OCI-LY7 (cell line): ENCODE measurements at regions of chr3 and their contacts with region 1.

Region 1: GRCh38 chr3:158005391-158006100 is 100.7 kb downstream of the SHOX2 start:
- DNase-seq: no peak
- H3K4me3 ChIP-seq: no peak overlapping the region
- H3K27ac ChIP-seq: no peak overlapping the region
- H3K4me1 ChIP-seq: no peaks in the 10 kb centered on the region
- CTCF ChIP-seq: no peak

Region 2: DNA sequence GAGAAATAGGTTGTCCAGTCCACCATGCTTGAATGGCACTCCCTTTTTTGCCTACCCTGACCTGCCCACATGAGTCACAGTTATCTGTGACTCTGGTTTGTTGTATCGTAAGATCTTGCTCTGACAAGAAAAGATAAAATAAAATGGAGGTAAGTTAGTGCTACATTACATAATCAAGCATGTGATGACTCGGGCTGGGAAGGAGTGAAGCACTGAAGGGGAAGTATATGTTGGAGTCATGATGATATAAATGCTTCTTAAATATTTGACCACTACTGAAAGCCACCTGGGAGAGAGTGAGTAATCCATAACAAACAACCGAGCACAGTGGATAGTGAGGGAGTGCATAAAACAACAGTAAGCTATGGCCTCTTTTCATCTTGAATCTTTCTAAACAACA is 23.7 kb before region 1 on chr3:
- CTCF ChIA-PET with region 1: no interaction called
- POLR2A ChIA-PET with region 1: no interaction called
- intact Hi-C with region 1: no loop called
- DNase-seq: no peak
- H3K4me3 ChIP-seq: no peak overlapping the region
- H3K27ac ChIP-seq: no peak overlapping the region
- H3K4me1 ChIP-seq: no peaks in the 10 kb centered on the region
- CTCF ChIP-seq: no peak

Region 3: DNA sequence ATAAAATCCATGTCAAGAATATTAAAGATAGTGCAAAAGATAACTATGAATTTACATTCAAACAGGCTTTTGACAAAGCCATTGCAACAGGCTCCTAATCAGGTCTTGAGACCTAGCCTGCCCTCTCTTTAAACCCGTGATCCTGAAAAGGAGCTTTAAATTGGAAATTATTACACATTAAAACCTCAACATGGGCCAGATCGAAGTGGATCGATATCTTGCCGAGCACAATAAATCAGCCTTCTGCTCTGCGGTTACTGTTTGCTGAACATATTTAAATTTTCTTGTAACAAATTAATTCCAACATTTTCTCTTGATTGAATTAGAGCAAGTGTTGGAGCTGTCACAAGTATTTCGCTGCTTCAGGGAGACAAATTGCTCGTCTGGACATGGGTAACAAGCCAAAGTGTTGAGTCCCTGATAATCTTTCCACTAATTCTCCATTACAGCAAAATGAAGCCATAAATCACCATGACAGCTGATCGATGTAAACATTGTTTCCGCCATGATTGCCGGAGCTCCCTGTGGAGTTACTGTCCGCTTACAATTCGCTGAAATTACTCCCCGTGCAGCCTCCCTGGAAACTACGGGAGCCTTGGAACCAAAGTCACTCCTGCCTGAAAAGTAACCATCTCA is 53.1 kb after region 1 on chr3:
- CTCF ChIA-PET with region 1: no interaction called
- POLR2A ChIA-PET with region 1: no interaction called
- intact Hi-C with region 1: loop called (anchors 10 kb)
- DNase-seq: no peak
- H3K4me3 ChIP-seq: no peak overlapping the region
- H3K27ac ChIP-seq: no peak overlapping the region
- H3K4me1 ChIP-seq: no peaks in the 10 kb centered on the region
- CTCF ChIP-seq: no peak